ENCODE measurements at regions of chr2 and their contacts with region 1.

Region 1: GRCh38 chr2:219245148-219245898 is at the starts of genes GLB1L and STK16:
- DNase-seq: peak; percentile 92
- ATAC-seq: peak; percentile 74
- H3K4me3 Mint-ChIP-seq: peak within 1 kb of the TSS; percentile 99
- H3K27ac Mint-ChIP-seq: peak within 1 kb of the TSS; percentile 100
- H3K4me1 Mint-ChIP-seq: peaks cover 66% of the 10 kb centered on the region
- H3K27me3 Mint-ChIP-seq: no peaks in the 10 kb centered on the region
- total RNA-seq, gene GLB1L: 3.4 to 4.0 TPM
- total RNA-seq, gene STK16: 31.2 to 31.5 TPM

Region 2: GRCh38 chr2:219177552-219178376 is 67.6 kb before region 1 on chr2 and contains the start of gene RETREG2:
- CTCF ChIA-PET with region 1: interaction called, 6 read pairs
- POLR2A ChIA-PET with region 1: interaction called, 12 read pairs
- DNase-seq: peak; percentile 82
- ATAC-seq: peak; percentile 55
- H3K4me3 Mint-ChIP-seq: peak within 1 kb of the TSS; percentile 92
- H3K27ac Mint-ChIP-seq: peak within 1 kb of the TSS; percentile 95
- H3K4me1 Mint-ChIP-seq: peaks cover 61% of the 10 kb centered on the region
- H3K27me3 Mint-ChIP-seq: no peaks in the 10 kb centered on the region
- total RNA-seq, gene RETREG2: 104 to 111 TPM